Naive thymus-derived CD4-positive, alpha-beta T cell (primary cell): ENCODE measurements at regions of chr1 and their contacts with region 1.

Region 1: DNA sequence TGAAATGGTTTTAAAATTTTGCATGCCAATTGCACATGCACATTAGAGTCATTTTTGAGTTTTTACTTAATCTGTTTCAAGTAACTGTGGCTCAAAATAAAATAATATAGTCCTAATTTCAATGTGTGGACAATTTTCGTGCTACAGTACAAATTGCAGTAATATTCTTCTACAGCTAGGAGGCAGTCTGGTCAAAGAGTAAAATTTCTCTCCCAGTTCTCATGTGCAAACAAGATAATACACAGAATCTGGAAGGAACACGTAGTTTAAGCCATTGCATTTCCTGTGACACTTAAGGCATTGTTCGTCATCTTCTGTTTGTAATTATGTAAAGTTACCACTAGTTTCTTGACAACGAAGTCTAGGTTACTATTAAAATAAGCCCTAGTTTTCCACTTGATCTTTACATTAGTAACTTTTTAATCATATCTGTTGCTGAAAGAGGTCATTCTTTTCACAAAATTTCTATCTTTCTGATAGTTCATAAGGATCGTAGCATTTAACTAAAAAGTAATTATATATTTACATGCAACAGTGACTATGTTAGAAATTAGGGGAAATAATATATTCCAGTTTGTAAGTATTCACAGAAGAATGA is 28.9 kb downstream of the ODR4 start:
- DNase-seq: peak in 7 of 9 donors; percentile 26 to 61 (median 40)
- ATAC-seq: peak; percentile 95
- H3K4me3 ChIP-seq: no peak overlapping the region
- H3K4me3 Mint-ChIP-seq: no peak overlapping the region
- H3K27ac ChIP-seq: no peak overlapping the region
- H3K27ac Mint-ChIP-seq: peak overlapping the region in 5 of 9 donors; percentile 41 to 78 (median 51)
- H3K4me1 ChIP-seq: no peaks in the 10 kb centered on the region
- H3K4me1 Mint-ChIP-seq: peaks cover 0 to 10% (median 0%) of the 10 kb centered on the region in 7 donors
- H3K27me3 ChIP-seq: no peaks in the 10 kb centered on the region
- H3K27me3 Mint-ChIP-seq: no peaks in the 10 kb centered on the region

Region 2: DNA sequence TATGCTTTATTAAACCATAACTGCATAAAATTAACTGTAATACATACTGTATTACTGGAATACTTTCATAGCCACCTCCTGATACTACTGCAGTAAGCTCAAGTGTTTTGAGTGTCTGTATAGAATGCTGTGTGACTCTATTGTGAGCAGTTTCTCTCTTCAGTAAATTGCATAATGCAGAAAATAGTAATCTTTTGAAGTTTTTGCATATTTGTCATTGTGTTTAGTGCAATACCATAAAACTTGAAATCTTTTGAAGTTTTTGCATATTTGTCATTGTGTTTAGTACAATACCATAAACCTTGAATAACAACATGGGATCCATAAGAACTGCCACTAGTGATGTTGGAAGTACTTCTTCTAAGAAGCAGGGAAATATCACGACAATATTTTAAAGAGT is 40.7 kb before region 1 on chr1:
- CTCF ChIA-PET with region 1: no interaction called
- POLR2A ChIA-PET with region 1: no interaction called
- intact Hi-C with region 1: no loop called
- DNase-seq: no peak
- ATAC-seq: no peak
- H3K4me3 ChIP-seq: no peak overlapping the region
- H3K4me3 Mint-ChIP-seq: no peak overlapping the region
- H3K27ac ChIP-seq: no peak overlapping the region
- H3K27ac Mint-ChIP-seq: no peak overlapping the region
- H3K4me1 ChIP-seq: no peaks in the 10 kb centered on the region
- H3K4me1 Mint-ChIP-seq: peaks cover 4 to 31% (median 16%) of the 10 kb centered on the region in 7 donors
- H3K27me3 ChIP-seq: no peaks in the 10 kb centered on the region
- H3K27me3 Mint-ChIP-seq: no peaks in the 10 kb centered on the region

Region 3: DNA sequence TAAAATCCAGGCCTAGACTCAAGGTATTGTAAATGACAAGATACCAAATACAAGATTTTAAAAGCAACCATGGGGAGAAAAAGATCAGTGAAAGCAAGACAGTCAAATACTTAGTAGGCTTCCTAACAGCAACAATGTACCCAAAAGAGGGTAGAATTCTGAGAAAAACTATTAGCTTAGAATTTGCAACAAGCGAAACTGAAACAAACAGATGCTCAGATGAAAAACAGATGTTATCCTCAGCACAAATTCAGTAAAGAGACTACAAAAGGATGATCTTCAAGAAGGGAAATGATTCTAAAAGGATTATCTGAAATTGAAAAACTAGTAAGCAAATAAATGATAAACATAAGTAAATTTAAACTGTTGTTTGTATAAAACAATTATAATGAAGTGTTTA is 16.4 kb after region 1 on chr1:
- CTCF ChIA-PET with region 1: no interaction called
- POLR2A ChIA-PET with region 1: no interaction called
- intact Hi-C with region 1: loop called in 1 of 2 experiments (anchors 1 kb)
- DNase-seq: no peak
- ATAC-seq: no peak
- H3K4me3 ChIP-seq: no peak overlapping the region
- H3K4me3 Mint-ChIP-seq: peak overlapping the region in 1 of 10 donors; percentile 75
- H3K27ac ChIP-seq: no peak overlapping the region
- H3K27ac Mint-ChIP-seq: peak overlapping the region in 4 of 9 donors; percentile 7 to 93 (median 30)
- H3K4me1 ChIP-seq: no peaks in the 10 kb centered on the region
- H3K4me1 Mint-ChIP-seq: peaks cover 0 to 28% (median 3%) of the 10 kb centered on the region in 7 donors
- H3K27me3 ChIP-seq: no peaks in the 10 kb centered on the region
- H3K27me3 Mint-ChIP-seq: no peaks in the 10 kb centered on the region

Region 4: GRCh38 chr1:186482661-186483255 is 78.2 kb after region 1 on chr1:
- CTCF ChIA-PET with region 1: no interaction called
- POLR2A ChIA-PET with region 1: no interaction called
- intact Hi-C with region 1: loop called in 1 of 2 experiments (anchors 1 kb)
- DNase-seq: peak in 7 of 9 donors; percentile 3 to 40 (median 14)
- ATAC-seq: peak; percentile 63
- H3K4me3 ChIP-seq: no peak overlapping the region
- H3K4me3 Mint-ChIP-seq: no peak overlapping the region
- H3K27ac ChIP-seq: no peak overlapping the region
- H3K27ac Mint-ChIP-seq: peak overlapping the region in 1 of 9 donors; percentile 6
- H3K4me1 ChIP-seq: no peaks in the 10 kb centered on the region
- H3K4me1 Mint-ChIP-seq: no peaks in the 10 kb centered on the region
- H3K27me3 ChIP-seq: no peaks in the 10 kb centered on the region
- H3K27me3 Mint-ChIP-seq: peaks cover 0 to 25% (median 0%) of the 10 kb centered on the region in 5 donors

Region 5: DNA sequence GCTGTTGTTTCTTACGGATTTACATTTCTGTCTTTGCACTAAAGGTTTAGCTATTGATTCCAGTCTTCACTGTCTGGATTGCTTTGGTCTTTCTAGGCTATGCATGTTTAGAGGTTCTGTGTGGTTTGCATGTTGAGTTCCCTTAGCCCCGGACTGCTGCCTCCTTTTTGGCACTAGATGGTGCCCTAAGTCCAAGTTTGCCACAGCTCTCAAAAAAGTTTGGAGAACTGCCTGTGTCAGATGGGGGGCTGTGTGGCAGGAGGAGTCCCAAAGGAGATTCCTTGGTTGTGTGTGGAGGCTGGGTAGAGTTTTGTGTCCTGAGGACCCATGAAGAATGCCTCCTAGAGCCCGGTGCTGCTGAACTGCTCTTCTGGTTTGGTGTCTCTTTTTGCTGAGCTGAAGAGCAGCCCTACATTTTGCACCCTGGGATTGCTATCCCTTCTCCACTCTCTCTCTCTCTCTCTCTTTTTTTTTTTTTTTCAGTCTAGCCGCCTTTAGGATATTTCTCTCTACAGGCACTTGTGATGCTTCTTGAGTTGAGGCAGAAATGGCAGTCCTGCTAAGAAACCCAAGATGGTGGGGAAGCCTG is 201.3 kb after region 1 on chr1:
- CTCF ChIA-PET with region 1: no interaction called
- POLR2A ChIA-PET with region 1: no interaction called
- intact Hi-C with region 1: loop called in 1 of 2 experiments (anchors 1 kb)
- DNase-seq: peak in 4 of 9 donors; percentile 6 to 36 (median 18)
- ATAC-seq: peak; percentile 54
- H3K4me3 ChIP-seq: no peak overlapping the region
- H3K4me3 Mint-ChIP-seq: no peak overlapping the region
- H3K27ac ChIP-seq: no peak overlapping the region
- H3K27ac Mint-ChIP-seq: no peak overlapping the region
- H3K4me1 ChIP-seq: no peaks in the 10 kb centered on the region
- H3K4me1 Mint-ChIP-seq: no peaks in the 10 kb centered on the region
- H3K27me3 ChIP-seq: no peaks in the 10 kb centered on the region
- H3K27me3 Mint-ChIP-seq: peaks cover 14 to 64% (median 35%) of the 10 kb centered on the region in 5 donors

Region 6: GRCh38 chr1:186680245-186681061 is 275.9 kb after region 1 on chr1 and contains the start of gene PTGS2:
- CTCF ChIA-PET with region 1: no interaction called
- POLR2A ChIA-PET with region 1: no interaction called
- intact Hi-C with region 1: loop called in 1 of 2 experiments (anchors 10 kb)
- DNase-seq: peak in 7 of 9 donors; percentile 0 to 49 (median 5)
- ATAC-seq: peak; percentile 94
- H3K4me3 ChIP-seq: no peak within 1 kb of the TSS
- H3K4me3 Mint-ChIP-seq: peak within 1 kb of the TSS; percentile 52 to 86 (median 76)
- H3K27ac ChIP-seq: no peak within 1 kb of the TSS
- H3K27ac Mint-ChIP-seq: no peak within 1 kb of the TSS
- H3K4me1 ChIP-seq: no peaks in the 10 kb centered on the region
- H3K4me1 Mint-ChIP-seq: peaks cover 6 to 22% (median 16%) of the 10 kb centered on the region in 7 donors
- H3K27me3 ChIP-seq: peaks cover 0 to 4% of the 10 kb centered on the region in 2 donors
- H3K27me3 Mint-ChIP-seq: peaks cover 54 to 72% (median 66%) of the 10 kb centered on the region in 5 donors
- total RNA-seq, gene PTGS2: 0.17 to 73.8 (median 21.8) TPM in 3 of 5 experiments, not detected in the others

Region 7: GRCh38 chr1:186806477-186806876 is 401.9 kb after region 1 on chr1:
- CTCF ChIA-PET with region 1: no interaction called
- POLR2A ChIA-PET with region 1: no interaction called
- intact Hi-C with region 1: loop called in 1 of 2 experiments (anchors 10 kb)
- DNase-seq: no peak
- ATAC-seq: no peak
- H3K4me3 ChIP-seq: no peak overlapping the region
- H3K4me3 Mint-ChIP-seq: no peak overlapping the region
- H3K27ac ChIP-seq: no peak overlapping the region
- H3K27ac Mint-ChIP-seq: no peak overlapping the region
- H3K4me1 ChIP-seq: no peaks in the 10 kb centered on the region
- H3K4me1 Mint-ChIP-seq: no peaks in the 10 kb centered on the region
- H3K27me3 ChIP-seq: no peaks in the 10 kb centered on the region
- H3K27me3 Mint-ChIP-seq: peaks cover 0 to 6% (median 3%) of the 10 kb centered on the region in 5 donors